ENCODE measurements at regions of chr3 and their contacts with region 1.

Region 1: GRCh38 chr3:159884661-159885402 is 103.8 kb upstream of the IL12A start:
- DNase-seq: peak; percentile 65
- ATAC-seq: peak; percentile 47
- H3K4me3 ChIP-seq: no peak overlapping the region
- H3K27ac ChIP-seq: peak overlapping the region; percentile 63
- H3K4me1 ChIP-seq: peaks cover 16% of the 10 kb centered on the region
- H3K27me3 ChIP-seq: no peaks in the 10 kb centered on the region
- CTCF ChIP-seq: peak; percentile 67
- POLR2A ChIP-seq: no peak
- RAD21 ChIP-seq: peak; percentile 70

Region 2: GRCh38 chr3:159828542-159828943 is 56.3 kb before region 1 on chr3:
- CTCF ChIA-PET with region 1: interaction called, 37 read pairs
- POLR2A ChIA-PET with region 1: interaction called, 3 read pairs
- dilution Hi-C with region 1: no loop called
- in situ Hi-C with region 1: no loop called
- intact Hi-C with region 1: loop called (anchors 1 kb)
- DNase-seq: peak; percentile 68
- ATAC-seq: peak; percentile 70
- H3K4me3 ChIP-seq: no peak overlapping the region
- H3K27ac ChIP-seq: 0 out of 2 replicates have a peak overlapping the region, but pooled peaks have one; percentile 65
- H3K4me1 ChIP-seq: peaks cover 15% of the 10 kb centered on the region
- H3K27me3 ChIP-seq: no peaks in the 10 kb centered on the region
- CTCF ChIP-seq: peak; percentile 60
- POLR2A ChIP-seq: no peak
- RAD21 ChIP-seq: peak; percentile 69

Region 3: GRCh38 chr3:159897331-159898075 is 12.7 kb after region 1 on chr3:
- CTCF ChIA-PET with region 1: interaction called, 12 read pairs
- POLR2A ChIA-PET with region 1: no interaction called
- dilution Hi-C with region 1: no loop called
- in situ Hi-C with region 1: no loop called
- intact Hi-C with region 1: no loop called
- DNase-seq: peak; percentile 81
- ATAC-seq: peak; percentile 36
- H3K4me3 ChIP-seq: no peak overlapping the region
- H3K27ac ChIP-seq: peak overlapping the region; percentile 10; the same call in 1 of the 2 replicates
- H3K4me1 ChIP-seq: peaks cover 11% of the 10 kb centered on the region
- H3K27me3 ChIP-seq: no peaks in the 10 kb centered on the region
- CTCF ChIP-seq: no peak
- POLR2A ChIP-seq: no peak
- RAD21 ChIP-seq: no peak

Region 4: DNA sequence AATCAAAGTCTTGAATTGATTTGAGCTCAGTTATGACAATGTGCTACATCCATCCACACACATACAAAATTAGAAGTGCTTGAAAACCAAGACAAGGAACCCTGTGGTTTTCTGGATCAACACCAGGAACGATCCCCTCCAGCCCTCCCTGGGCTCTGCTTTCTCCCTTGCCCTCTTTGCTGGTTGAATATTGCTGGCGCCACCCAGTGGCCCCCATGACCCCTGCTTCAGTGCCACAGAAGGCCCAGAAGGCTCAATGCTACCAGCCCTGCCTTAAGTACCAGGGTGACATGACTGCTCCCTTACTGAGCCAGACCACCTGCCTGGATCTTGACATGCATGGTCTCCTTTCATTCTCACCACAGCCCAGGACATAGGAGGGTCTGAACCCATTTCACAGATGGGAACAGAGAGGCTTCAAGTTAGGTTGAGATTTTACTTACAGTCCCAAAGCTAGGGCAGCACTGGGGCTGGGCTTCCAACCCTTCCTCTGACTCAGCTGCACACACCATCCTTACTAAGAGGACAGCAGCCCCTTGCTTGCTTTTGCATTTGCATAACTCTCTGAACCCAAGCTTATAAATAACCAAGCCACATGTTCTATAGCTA is 118.8 kb after region 1 on chr3:
- CTCF ChIA-PET with region 1: interaction called, 93 read pairs
- POLR2A ChIA-PET with region 1: no interaction called
- dilution Hi-C with region 1: no loop called
- in situ Hi-C with region 1: loop called (anchors 5 kb)
- intact Hi-C with region 1: loop called (anchors 1 kb)
- DNase-seq: peak; percentile 31
- ATAC-seq: peak; percentile 64
- H3K4me3 ChIP-seq: no peak overlapping the region
- H3K27ac ChIP-seq: no peak overlapping the region
- H3K4me1 ChIP-seq: 0 out of 2 replicates have a peak, but pooled peaks cover 1% of the 10 kb centered on the region
- H3K27me3 ChIP-seq: no peaks in the 10 kb centered on the region
- CTCF ChIP-seq: peak; percentile 51
- POLR2A ChIP-seq: no peak
- RAD21 ChIP-seq: peak; percentile 59

Region 5: DNA sequence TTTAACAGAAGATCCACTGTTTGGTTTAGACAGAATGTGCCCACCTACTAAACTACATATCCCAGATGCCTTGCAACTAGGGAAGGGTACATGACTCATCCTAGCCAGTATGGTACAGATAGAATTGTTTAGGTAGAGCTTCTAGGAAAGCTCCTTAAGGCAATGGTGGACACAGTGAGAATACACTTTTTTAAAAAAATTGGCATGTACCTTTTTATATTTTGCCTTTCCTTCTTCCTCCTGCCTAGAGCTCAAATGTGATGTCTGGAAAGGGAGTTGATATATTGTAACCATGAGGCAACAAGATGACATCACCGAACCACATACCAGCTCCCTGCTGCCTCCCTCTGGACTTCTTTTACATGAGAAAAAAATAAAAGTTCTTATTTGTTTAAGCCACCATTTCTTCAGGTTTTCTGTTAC is 326.0 kb after region 1 on chr3:
- CTCF ChIA-PET with region 1: no interaction called
- POLR2A ChIA-PET with region 1: no interaction called
- dilution Hi-C with region 1: no loop called
- in situ Hi-C with region 1: no loop called
- intact Hi-C with region 1: loop called (anchors 2 kb)
- DNase-seq: peak; percentile 73
- ATAC-seq: peak; percentile 82
- H3K4me3 ChIP-seq: no peak overlapping the region
- H3K27ac ChIP-seq: no peak overlapping the region
- H3K4me1 ChIP-seq: no peaks in the 10 kb centered on the region
- H3K27me3 ChIP-seq: peaks cover 7% of the 10 kb centered on the region
- CTCF ChIP-seq: peak; percentile 61
- POLR2A ChIP-seq: no peak
- RAD21 ChIP-seq: peak; percentile 44

Region 6: DNA sequence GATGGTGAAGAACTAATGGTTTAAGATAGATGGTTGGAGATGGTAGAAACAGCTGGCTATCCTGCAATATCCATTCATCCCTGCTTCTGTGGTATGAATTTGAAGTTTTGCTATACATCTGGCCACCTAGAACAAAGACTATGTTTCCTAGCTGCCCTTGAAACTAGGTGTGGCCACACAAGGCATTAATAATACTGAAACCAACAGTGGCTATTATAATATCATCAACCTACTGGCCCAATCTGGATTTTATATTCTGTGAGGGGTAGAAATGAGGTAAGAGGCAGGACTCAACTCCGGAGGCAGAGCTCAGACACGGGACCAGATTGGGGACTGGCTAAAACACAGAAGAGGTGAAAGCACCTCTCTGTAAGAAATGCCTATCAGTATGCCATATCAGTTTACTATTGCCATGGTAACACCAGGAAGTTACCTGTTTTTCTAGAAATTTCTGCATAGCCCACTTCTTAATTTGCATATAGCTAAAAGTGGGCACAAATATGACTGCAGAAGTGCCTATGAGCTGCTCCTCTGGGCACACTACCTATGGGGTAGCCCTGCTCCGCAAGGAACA is 505.8 kb after region 1 on chr3:
- CTCF ChIA-PET with region 1: no interaction called
- POLR2A ChIA-PET with region 1: no interaction called
- dilution Hi-C with region 1: no loop called
- in situ Hi-C with region 1: no loop called
- intact Hi-C with region 1: no loop called
- DNase-seq: no peak
- ATAC-seq: no peak
- H3K4me3 ChIP-seq: no peak overlapping the region
- H3K27ac ChIP-seq: no peak overlapping the region
- H3K4me1 ChIP-seq: peaks cover 3% of the 10 kb centered on the region; the same call in 1 of the 2 replicates
- H3K27me3 ChIP-seq: no peaks in the 10 kb centered on the region
- CTCF ChIP-seq: no peak
- POLR2A ChIP-seq: no peak
- RAD21 ChIP-seq: no peak

Region 7: DNA sequence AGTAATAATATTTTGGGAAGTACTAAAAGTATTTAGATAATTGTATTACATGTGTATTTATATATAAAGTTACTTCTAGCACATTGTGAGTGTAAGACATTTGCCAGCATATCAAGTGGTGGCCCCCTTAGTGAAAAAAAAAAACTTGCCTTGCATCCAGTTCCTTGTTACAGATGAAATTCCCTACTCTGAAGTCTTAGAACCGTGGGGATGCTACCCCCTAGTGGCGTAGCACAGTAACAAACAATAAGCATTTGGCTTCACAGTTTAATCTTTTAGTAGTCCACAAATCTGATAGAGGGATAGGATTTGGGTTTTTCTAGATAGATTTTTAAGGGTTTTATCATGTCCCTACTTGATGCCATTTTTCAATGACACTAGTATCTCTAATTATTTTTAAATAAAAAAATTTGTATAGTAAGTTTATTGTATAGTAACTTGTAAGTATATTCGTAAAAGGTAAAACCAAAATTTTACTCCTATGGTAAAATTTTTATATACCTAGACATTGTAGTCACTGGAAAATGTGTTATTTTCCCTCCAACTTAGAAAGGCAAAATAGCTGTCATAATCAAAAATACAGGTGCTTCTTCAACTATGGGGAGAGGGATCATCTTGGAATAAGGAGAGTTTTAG is 528.9 kb after region 1 on chr3:
- CTCF ChIA-PET with region 1: no interaction called
- POLR2A ChIA-PET with region 1: no interaction called
- dilution Hi-C with region 1: no loop called
- in situ Hi-C with region 1: loop called (anchors 25 kb)
- intact Hi-C with region 1: loop called (anchors 5 kb)
- DNase-seq: peak; percentile 84
- ATAC-seq: peak; percentile 91
- H3K4me3 ChIP-seq: no peak overlapping the region
- H3K27ac ChIP-seq: no peak overlapping the region
- H3K4me1 ChIP-seq: peaks cover 3% of the 10 kb centered on the region
- H3K27me3 ChIP-seq: no peaks in the 10 kb centered on the region
- CTCF ChIP-seq: peak; percentile 89
- POLR2A ChIP-seq: no peak
- RAD21 ChIP-seq: peak; percentile 84

Measured in IMR-90 (cell line).